K562 (cell line): ENCODE measurements at regions of chr10 and their contacts with region 1.

Region 1: DNA sequence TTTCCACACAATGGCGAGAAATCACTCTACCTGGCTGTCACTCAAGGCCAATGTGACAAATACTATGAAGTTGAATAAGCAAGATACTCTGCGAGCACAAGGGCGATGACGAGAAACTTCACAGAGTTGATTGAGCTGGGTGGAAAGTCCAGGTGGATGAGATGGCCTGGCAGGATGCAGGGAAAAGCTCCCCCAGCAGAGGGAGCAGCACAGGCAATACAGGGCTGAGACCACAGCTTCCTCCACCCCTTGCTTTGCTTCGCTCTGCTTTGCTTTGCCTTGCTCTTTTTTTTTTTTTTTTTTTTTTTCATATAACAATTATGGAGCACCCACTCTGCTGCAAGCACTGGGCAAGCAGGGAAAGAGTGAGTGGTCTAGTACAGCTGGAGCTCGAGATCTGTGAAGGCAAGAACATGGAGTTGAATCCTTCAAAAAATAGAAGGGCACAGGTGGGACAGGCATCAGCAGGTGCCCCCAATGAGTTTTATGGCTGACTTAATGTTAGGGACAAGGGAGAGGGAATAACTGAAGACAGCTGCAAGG is 88.3 kb downstream of the CABCOCO1 start:
- DNase-seq: peak; percentile 80 to 93 (median 86)
- ATAC-seq: peak; percentile 97
- H3K4me3 ChIP-seq: no peak overlapping the region
- H3K27ac ChIP-seq: peak overlapping the region; percentile 66; the same call in 2 of the 3 replicates
- H3K4me1 ChIP-seq: peaks cover 4 to 36% of the 10 kb centered on the region in 2 experiments; a peak in 3 of 5 replicates
- H3K27me3 ChIP-seq: no peaks in the 10 kb centered on the region
- CTCF ChIP-seq: peak; percentile 92 to 97 (median 94)
- EP300 ChIP-seq: peak; percentile 34; the same call in 1 of the 2 replicates
- POLR2A ChIP-seq: no peak
- RAD21 ChIP-seq: peak; percentile 79 to 92

Region 2: GRCh38 chr10:61786728-61787127 is 35.7 kb after region 1 on chr10:
- CTCF ChIA-PET with region 1: no interaction called
- POLR2A ChIA-PET with region 1: no interaction called
- in situ Hi-C with region 1: no loop called
- intact Hi-C with region 1: loop called (anchors 2 kb)
- DNase-seq: peak in 2 of 4 experiments; percentile 67 to 68
- ATAC-seq: peak; percentile 20
- H3K4me3 ChIP-seq: no peak overlapping the region
- H3K27ac ChIP-seq: peak overlapping the region; percentile 61; the same call in 2 of the 3 replicates
- H3K4me1 ChIP-seq: peaks cover 5 to 61% of the 10 kb centered on the region in 2 experiments
- H3K27me3 ChIP-seq: no peaks in the 10 kb centered on the region
- CTCF ChIP-seq: no peak
- EP300 ChIP-seq: peak; percentile 36; the same call in 1 of the 2 replicates
- POLR2A ChIP-seq: no peak
- RAD21 ChIP-seq: no peak

Region 3: GRCh38 chr10:61896854-61897661 is 146.1 kb after region 1 on chr10:
- CTCF ChIA-PET with region 1: interaction called, 5 read pairs
- POLR2A ChIA-PET with region 1: interaction called, 3 read pairs
- in situ Hi-C with region 1: no loop called
- intact Hi-C with region 1: loop called (anchors 5 kb)
- DNase-seq: peak; percentile 88 to 89 (median 88)
- ATAC-seq: peak; percentile 88
- H3K4me3 ChIP-seq: no peak overlapping the region
- H3K27ac ChIP-seq: no peak overlapping the region
- H3K4me1 ChIP-seq: peaks cover 6 to 24% of the 10 kb centered on the region in 2 experiments
- H3K27me3 ChIP-seq: no peaks in the 10 kb centered on the region
- CTCF ChIP-seq: peak; percentile 79 to 91 (median 80)
- EP300 ChIP-seq: no peak
- POLR2A ChIP-seq: no peak
- RAD21 ChIP-seq: peak; percentile 39 to 71

Region 4: GRCh38 chr10:63115732-63116383 is 1364.9 kb after region 1 on chr10:
- CTCF ChIA-PET with region 1: no interaction called
- POLR2A ChIA-PET with region 1: no interaction called
- in situ Hi-C with region 1: loop called (anchors 25 kb)
- intact Hi-C with region 1: no loop called
- DNase-seq: peak in 3 of 4 experiments; percentile 24 to 66 (median 56)
- ATAC-seq: peak; percentile 84
- H3K4me3 ChIP-seq: no peak overlapping the region
- H3K27ac ChIP-seq: peak overlapping the region; percentile 58; the same call in 2 of the 3 replicates
- H3K4me1 ChIP-seq: peaks cover 0 to 19% of the 10 kb centered on the region in 2 experiments; a peak in 4 of 5 replicates
- H3K27me3 ChIP-seq: no peaks in the 10 kb centered on the region
- CTCF ChIP-seq: no peak
- EP300 ChIP-seq: peak; percentile 59; the same call in 1 of the 2 replicates
- POLR2A ChIP-seq: no peak
- RAD21 ChIP-seq: peak in 1 of 2 experiments; percentile 15; a peak in 1 of 4 replicates